Activated B cell treated with CpG ODN at 0.5 μM for 24 hours (primary cell): ENCODE measurements at regions of chr1 and their contacts with region 1.

Region 1: GRCh38 chr1:155485945-155486344 is 76.7 kb downstream of the ASH1L start:
- DNase-seq: no peak
- ATAC-seq: peak; percentile 34
- H3K4me3 Mint-ChIP-seq: peak overlapping the region; percentile 24
- H3K27ac Mint-ChIP-seq: peak overlapping the region; percentile 73
- H3K4me1 Mint-ChIP-seq: peaks cover 13% of the 10 kb centered on the region
- H3K27me3 Mint-ChIP-seq: no peaks in the 10 kb centered on the region
- CTCF ChIP-seq: no peak

Region 2: DNA sequence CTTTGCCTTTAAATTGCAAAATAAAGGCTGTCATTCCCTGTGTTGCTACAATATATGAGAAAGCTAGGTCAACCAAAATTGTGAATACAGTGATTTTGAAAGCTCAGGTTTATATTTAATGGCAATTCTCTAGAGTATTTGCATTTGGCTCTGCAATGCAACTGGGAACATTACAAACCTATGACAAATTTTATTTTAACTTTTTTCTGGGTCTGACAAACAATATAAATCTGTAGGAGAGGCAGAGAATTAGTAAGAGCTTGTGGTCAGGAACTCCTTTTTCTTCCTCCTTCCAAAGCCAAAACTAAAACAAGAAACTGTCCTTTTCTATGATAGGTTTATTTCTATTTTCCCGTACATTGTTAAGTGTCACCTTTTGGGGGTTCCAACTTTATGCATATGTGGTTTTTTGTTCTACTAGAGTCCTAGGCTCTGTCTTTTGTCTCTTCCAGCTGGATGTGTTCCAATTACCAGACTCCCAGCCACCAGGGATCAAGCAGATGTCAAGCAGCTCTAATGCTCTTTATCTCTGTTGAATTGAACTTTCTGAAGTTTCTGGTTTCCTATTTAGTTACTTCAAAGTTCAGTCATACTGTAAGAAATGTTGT is 30.3 kb before region 1 on chr1:
- CTCF ChIA-PET with region 1: no interaction called
- POLR2A ChIA-PET with region 1: no interaction called
- intact Hi-C with region 1: no loop called
- DNase-seq: no peak
- ATAC-seq: no peak
- H3K4me3 Mint-ChIP-seq: no peak overlapping the region
- H3K27ac Mint-ChIP-seq: no peak overlapping the region
- H3K4me1 Mint-ChIP-seq: no peaks in the 10 kb centered on the region
- H3K27me3 Mint-ChIP-seq: no peaks in the 10 kb centered on the region
- CTCF ChIP-seq: no peak

Region 3: DNA sequence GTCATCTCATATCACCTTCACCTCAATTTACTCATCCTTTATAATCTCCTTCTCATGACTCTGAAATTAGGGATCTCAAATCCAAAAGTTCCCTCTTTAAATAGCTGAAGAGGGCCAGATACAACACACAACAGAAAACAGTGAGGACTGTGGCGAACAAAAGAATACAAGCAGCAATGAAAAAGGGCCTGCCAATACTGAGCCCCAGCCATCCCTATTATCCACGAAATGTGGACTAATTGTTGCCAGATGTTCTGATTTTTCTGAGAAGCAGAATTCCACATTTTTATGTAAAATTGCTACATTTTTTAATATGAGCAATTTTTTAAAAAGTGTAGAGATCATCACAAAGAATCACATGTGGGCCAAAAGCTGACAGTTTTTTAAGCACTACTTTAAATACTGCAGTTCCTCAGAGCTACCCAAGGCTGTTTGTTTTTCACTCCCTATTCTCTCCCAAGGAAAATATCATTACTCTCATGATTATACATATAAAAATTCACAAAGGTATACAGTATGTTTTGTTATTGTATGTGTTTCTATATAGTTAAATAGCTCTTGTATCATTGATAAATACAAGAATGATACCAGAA is 13.4 kb before region 1 on chr1:
- CTCF ChIA-PET with region 1: interaction called, 6 read pairs
- POLR2A ChIA-PET with region 1: no interaction called
- intact Hi-C with region 1: loop called (anchors 2 kb)
- DNase-seq: no peak
- ATAC-seq: no peak
- H3K4me3 Mint-ChIP-seq: no peak overlapping the region
- H3K27ac Mint-ChIP-seq: peak overlapping the region; percentile 4
- H3K4me1 Mint-ChIP-seq: peaks cover 11% of the 10 kb centered on the region
- H3K27me3 Mint-ChIP-seq: no peaks in the 10 kb centered on the region
- CTCF ChIP-seq: no peak

Region 4: DNA sequence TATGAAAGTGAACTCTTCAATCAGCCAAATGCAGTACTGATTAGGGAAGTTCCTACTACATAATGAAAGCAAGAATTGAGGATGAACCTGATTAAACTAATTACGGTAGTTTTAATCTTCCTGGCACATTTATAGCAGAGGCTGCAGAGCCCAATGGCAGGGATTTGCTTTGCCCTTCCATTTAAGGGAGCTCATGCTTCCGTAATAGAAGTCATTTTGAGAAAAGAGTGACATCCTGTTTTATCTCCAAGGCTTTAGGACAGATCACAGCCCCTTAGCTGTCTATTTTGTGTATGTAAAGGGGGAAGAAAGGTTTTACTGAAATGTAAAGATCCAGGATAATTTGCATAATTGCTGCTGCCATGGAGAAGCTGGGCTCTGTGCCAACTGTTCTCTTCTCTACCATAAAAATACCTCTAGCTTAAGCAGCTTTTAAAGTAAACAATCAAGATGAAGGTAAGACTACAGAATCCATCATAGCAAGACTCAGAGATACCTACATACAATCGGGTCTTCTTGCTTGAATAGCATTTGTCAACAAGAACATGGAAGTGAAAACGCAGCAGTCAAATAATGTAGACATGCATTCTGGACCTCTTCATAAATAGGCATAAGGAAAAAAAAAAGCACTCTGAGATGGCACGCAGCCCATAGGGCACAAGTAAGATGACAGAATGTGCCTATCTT is 14.2 kb after region 1 on chr1:
- CTCF ChIA-PET with region 1: no interaction called
- POLR2A ChIA-PET with region 1: no interaction called
- intact Hi-C with region 1: no loop called
- DNase-seq: no peak
- ATAC-seq: peak; percentile 74
- H3K4me3 Mint-ChIP-seq: peak overlapping the region; percentile 72
- H3K27ac Mint-ChIP-seq: peak overlapping the region; percentile 84
- H3K4me1 Mint-ChIP-seq: peaks cover 57% of the 10 kb centered on the region
- H3K27me3 Mint-ChIP-seq: no peaks in the 10 kb centered on the region
- CTCF ChIP-seq: no peak